ENCODE measurements at regions of chr5 and their contacts with region 1.

Region 1: DNA sequence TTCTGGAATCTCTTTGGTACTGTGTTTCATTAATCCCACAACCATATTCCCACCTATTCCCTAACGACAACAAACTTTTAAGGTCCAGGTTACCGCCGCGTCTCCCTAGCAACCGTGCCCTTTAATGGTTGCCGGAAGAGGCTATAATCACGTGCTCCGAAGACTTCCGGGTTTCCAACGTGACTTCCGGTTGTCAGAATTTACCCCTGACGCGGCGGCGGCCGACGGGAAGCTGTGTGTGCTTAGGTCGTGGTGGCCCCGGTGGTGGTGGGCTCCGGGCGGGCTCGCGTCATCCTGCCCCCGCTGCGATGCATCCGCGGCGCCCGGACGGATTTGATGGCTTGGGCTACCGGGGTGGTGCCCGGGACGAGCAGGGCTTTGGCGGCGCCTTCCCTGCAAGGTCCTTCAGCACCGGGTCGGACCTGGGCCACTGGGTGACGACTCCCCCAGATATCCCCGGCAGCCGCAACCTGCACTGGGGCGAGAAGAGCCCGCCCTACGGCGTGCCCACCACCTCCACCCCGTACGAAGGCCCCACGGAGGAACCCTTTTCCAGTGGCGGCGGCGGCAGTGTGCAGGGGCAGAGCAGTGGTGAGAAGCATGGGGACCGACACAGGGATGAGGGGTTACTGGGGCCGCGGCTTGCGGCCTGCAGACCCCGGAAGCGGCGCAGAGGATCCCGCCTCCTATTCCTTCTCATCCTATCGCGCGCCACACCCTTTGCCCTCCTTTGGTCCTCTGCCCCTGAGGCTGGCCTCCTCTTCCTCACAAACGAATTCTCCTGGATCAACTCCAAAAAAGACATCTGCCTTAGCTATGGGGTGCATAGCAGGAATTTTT is at the start of gene SLC25A46:
- DNase-seq: peak; percentile 91 to 93 (median 92)
- H3K4me3 ChIP-seq: peak within 1 kb of the TSS; percentile 74 to 86
- H3K4me3 Mint-ChIP-seq: peak within 1 kb of the TSS; percentile 94 to 99 (median 98)
- H3K27ac ChIP-seq: peak within 1 kb of the TSS; percentile 88
- H3K27ac Mint-ChIP-seq: peak within 1 kb of the TSS; percentile 96 to 100 (median 99)
- H3K4me1 ChIP-seq: peaks cover 32% of the 10 kb centered on the region
- H3K4me1 Mint-ChIP-seq: peaks cover 21 to 44% (median 31%) of the 10 kb centered on the region in 4 donors
- H3K27me3 ChIP-seq: no peaks in the 10 kb centered on the region
- H3K27me3 Mint-ChIP-seq: peaks cover 5 to 7% of the 10 kb centered on the region in 2 donors
- total RNA-seq, gene SLC25A46: 38.1 TPM

Region 2: GRCh38 chr5:110726249-110727024 is 12.6 kb before region 1 on chr5 and contains the start of gene TMEM232:
- CTCF ChIA-PET with region 1: interaction called, 8 read pairs
- POLR2A ChIA-PET with region 1: interaction called, 9 read pairs
- intact Hi-C with region 1: loop called (anchors 1 kb)
- DNase-seq: peak; percentile 64 to 88 (median 73)
- H3K4me3 ChIP-seq: peak within 1 kb of the TSS; percentile 61 to 75
- H3K4me3 Mint-ChIP-seq: peak within 1 kb of the TSS; percentile 79 to 94 (median 86)
- H3K27ac ChIP-seq: no peak within 1 kb of the TSS
- H3K27ac Mint-ChIP-seq: peak within 1 kb of the TSS; percentile 27 to 90 (median 44)
- H3K4me1 ChIP-seq: no peaks in the 10 kb centered on the region
- H3K4me1 Mint-ChIP-seq: peaks cover 0 to 9% (median 3%) of the 10 kb centered on the region in 4 donors
- H3K27me3 ChIP-seq: no peaks in the 10 kb centered on the region
- H3K27me3 Mint-ChIP-seq: peaks cover 0 to 5% of the 10 kb centered on the region in 2 donors
- total RNA-seq, gene TMEM232: 1.7 to 2.2 TPM

Region 3: GRCh38 chr5:110757118-110757729 is 18.2 kb after region 1 on chr5:
- CTCF ChIA-PET with region 1: interaction called, 24 read pairs
- POLR2A ChIA-PET with region 1: interaction called, 21 read pairs
- intact Hi-C with region 1: loop called (anchors 1 kb)
- DNase-seq: peak in 4 of 5 donors; percentile 28 to 43 (median 30)
- H3K4me3 ChIP-seq: no peak overlapping the region
- H3K4me3 Mint-ChIP-seq: no peak overlapping the region
- H3K27ac ChIP-seq: no peak overlapping the region
- H3K27ac Mint-ChIP-seq: peak overlapping the region in 1 of 7 donors; percentile 40
- H3K4me1 ChIP-seq: peaks cover 26% of the 10 kb centered on the region
- H3K4me1 Mint-ChIP-seq: peaks cover 20 to 31% (median 22%) of the 10 kb centered on the region in 4 donors
- H3K27me3 ChIP-seq: no peaks in the 10 kb centered on the region
- H3K27me3 Mint-ChIP-seq: no peaks in the 10 kb centered on the region

Region 4: GRCh38 chr5:110823571-110823970 is 84.5 kb after region 1 on chr5:
- CTCF ChIA-PET with region 1: no interaction called
- POLR2A ChIA-PET with region 1: no interaction called
- intact Hi-C with region 1: no loop called
- DNase-seq: no peak
- H3K4me3 ChIP-seq: no peak overlapping the region
- H3K4me3 Mint-ChIP-seq: no peak overlapping the region
- H3K27ac ChIP-seq: no peak overlapping the region
- H3K27ac Mint-ChIP-seq: no peak overlapping the region
- H3K4me1 ChIP-seq: no peaks in the 10 kb centered on the region
- H3K4me1 Mint-ChIP-seq: no peaks in the 10 kb centered on the region
- H3K27me3 ChIP-seq: no peaks in the 10 kb centered on the region
- H3K27me3 Mint-ChIP-seq: peaks cover 3 to 5% of the 10 kb centered on the region in 2 donors

Region 5: DNA sequence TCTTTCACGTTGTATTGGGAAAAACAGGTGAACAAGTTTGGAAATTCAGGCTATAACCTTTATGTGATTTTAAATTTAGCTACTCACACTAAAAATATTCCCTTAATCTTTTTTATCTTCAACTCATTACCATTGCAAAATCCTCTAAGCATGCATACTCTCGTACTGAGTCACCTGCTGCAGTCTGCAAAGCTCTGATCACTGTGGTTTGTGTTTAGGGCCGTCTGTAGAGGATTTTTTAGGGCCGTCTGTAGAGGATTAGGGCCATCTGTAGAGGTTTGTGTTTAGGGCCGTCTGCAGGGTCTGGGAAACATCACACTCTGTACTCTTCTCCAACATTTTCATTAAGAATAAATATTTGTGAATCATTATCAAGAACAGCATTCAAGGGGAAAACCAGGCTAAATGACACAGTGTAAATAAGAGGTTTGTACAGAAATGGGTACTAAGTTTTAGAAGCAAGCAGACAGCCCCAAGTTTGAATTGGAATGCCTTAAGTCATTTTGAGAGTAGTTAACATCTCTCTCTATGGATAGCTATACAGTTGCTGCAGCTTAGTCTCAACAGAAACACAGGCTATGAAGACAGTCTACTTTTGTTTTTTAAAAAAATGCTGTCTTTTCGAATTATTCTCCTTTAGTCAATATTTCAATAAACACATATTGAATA is 177.5 kb after region 1 on chr5:
- CTCF ChIA-PET with region 1: no interaction called
- POLR2A ChIA-PET with region 1: no interaction called
- intact Hi-C with region 1: no loop called
- DNase-seq: no peak
- H3K4me3 ChIP-seq: no peak overlapping the region
- H3K4me3 Mint-ChIP-seq: no peak overlapping the region
- H3K27ac ChIP-seq: no peak overlapping the region
- H3K27ac Mint-ChIP-seq: no peak overlapping the region
- H3K4me1 ChIP-seq: no peaks in the 10 kb centered on the region
- H3K4me1 Mint-ChIP-seq: no peaks in the 10 kb centered on the region
- H3K27me3 ChIP-seq: no peaks in the 10 kb centered on the region
- H3K27me3 Mint-ChIP-seq: peaks cover 2 to 4% of the 10 kb centered on the region in 2 donors

Region 6: GRCh38 chr5:111512375-111513130 is 773.5 kb after region 1 on chr5 and contains the start of gene STARD4:
- CTCF ChIA-PET with region 1: no interaction called
- POLR2A ChIA-PET with region 1: no interaction called
- intact Hi-C with region 1: loop called (anchors 10 kb)
- DNase-seq: peak; percentile 91 to 95 (median 93)
- H3K4me3 ChIP-seq: peak within 1 kb of the TSS; percentile 37 to 77
- H3K4me3 Mint-ChIP-seq: peak within 1 kb of the TSS; percentile 98 to 99 (median 98)
- H3K27ac ChIP-seq: peak within 1 kb of the TSS; percentile 77
- H3K27ac Mint-ChIP-seq: peak within 1 kb of the TSS; percentile 94 to 99 (median 97)
- H3K4me1 ChIP-seq: peaks cover 35% of the 10 kb centered on the region
- H3K4me1 Mint-ChIP-seq: peaks cover 24 to 48% (median 29%) of the 10 kb centered on the region in 4 donors
- H3K27me3 ChIP-seq: no peaks in the 10 kb centered on the region
- H3K27me3 Mint-ChIP-seq: no peaks in the 10 kb centered on the region
- total RNA-seq, gene STARD4: 12.4 to 17.2 TPM

Region 7: DNA sequence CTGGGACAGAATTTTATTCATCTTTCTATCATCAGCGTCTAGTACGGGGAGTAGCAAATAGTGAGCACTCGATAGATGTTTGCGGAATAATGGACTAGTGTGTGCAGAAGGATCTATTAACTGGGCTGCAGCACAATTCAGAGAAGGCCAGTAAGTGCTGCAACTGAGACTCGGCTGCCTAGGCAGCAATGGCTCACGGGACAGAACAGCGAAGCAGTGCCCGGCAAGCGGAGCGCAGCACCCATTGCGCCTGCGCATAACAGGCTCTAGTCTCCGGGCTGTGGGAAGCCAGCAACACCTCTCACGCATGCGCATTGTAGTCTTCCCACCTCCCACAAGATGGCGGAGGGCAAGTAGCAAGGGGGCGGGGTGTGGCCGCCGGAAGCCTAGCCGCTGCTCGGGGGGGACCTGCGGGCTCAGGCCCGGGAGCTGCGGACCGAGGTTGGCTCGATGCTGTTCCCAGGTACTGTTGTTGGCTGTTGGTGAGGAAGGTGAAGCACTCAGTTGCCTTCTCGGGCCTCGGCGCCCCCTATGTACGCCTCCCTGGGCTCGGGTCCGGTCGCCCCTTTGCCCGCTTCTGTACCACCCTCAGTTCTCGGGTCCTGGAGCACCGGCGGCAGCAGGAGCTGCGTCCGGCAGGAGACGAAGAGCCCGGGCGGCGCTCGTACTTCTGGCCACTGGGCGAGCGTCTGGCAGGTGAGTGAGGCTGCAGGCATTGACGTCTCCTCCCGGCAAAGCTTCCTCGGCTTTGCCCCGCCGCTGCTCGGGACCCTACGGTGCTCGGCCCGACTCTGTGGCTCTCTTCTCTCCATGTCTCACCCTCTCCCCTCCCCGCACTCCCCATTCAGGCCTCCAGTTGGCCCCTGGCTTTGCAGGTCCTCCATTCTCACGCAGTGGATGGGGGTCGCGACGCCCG is 1968.4 kb after region 1 on chr5:
- CTCF ChIA-PET with region 1: no interaction called
- POLR2A ChIA-PET with region 1: no interaction called
- intact Hi-C with region 1: loop called (anchors 10 kb)
- DNase-seq: peak; percentile 95 to 99 (median 98)
- H3K4me3 ChIP-seq: peak overlapping the region; percentile 80 to 86
- H3K4me3 Mint-ChIP-seq: peak overlapping the region; percentile 91 to 96 (median 95)
- H3K27ac ChIP-seq: peak overlapping the region; percentile 86
- H3K27ac Mint-ChIP-seq: peak overlapping the region; percentile 89 to 97 (median 93)
- H3K4me1 ChIP-seq: peaks cover 52% of the 10 kb centered on the region
- H3K4me1 Mint-ChIP-seq: peaks cover 41 to 61% (median 48%) of the 10 kb centered on the region in 4 donors
- H3K27me3 ChIP-seq: no peaks in the 10 kb centered on the region
- H3K27me3 Mint-ChIP-seq: no peaks in the 10 kb centered on the region